ENCODE measurements at regions of chr3 and their contacts with region 1.

Region 1: DNA sequence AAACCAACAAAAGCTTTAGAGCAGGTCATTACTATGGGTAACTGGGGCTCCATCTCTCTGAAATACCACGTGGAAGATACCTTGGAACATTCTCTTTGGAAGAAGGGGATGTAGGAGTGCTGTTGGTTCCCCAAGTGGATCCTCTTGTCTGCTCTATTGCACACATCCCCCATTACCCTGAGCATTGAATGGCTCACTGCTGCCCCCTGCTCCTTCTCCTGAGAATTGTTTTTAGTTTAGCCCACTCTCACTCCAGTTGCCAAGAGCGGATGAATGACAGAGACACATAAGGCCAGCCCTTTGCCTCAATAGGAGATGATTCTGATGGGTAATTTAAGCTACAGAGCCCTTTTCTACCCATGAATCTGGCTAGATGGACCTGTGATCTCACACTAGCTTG is 135.6 kb upstream of the SUCLG2 start:
- DNase-seq: no peak
- H3K4me3 ChIP-seq: no peak overlapping the region
- H3K27ac ChIP-seq: no peak overlapping the region
- H3K4me1 ChIP-seq: no peaks in the 10 kb centered on the region
- H3K27me3 ChIP-seq: no peaks in the 10 kb centered on the region
- CTCF ChIP-seq: peak; percentile 68

Region 2: DNA sequence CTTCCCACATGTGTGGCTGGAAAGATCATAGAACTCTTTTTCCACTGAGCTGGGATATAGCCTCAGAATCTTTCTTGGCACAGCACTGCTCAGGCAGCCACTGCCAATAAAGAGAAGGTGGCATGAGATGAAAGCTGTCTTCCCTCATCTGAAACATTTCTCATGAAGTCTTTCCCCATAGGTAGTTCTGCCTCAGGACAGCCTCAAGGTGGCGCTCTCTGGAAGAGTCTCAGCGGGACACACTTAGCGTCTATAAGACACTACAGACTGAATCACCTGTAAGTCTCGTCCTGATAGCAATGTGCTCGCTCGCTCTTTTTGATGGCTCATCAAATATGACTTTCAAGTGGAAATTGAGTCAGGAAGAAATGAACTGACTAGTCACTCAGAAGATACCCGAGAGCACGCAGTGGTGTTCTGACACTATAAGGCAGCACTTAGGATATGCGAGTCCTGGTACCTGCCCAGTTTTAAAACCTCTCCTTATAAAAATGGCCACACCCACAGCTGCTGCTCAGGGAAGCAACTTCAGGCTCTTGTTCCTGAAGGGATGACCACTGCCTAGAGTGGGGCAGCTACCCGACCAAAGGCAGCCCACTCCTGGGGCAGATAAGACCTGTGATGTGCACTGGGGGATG is 405.2 kb before region 1 on chr3:
- intact Hi-C with region 1: loop called (anchors 10 kb)
- DNase-seq: no peak
- H3K4me3 ChIP-seq: no peak overlapping the region
- H3K27ac ChIP-seq: no peak overlapping the region
- H3K4me1 ChIP-seq: peaks cover 37% of the 10 kb centered on the region
- H3K27me3 ChIP-seq: no peaks in the 10 kb centered on the region
- CTCF ChIP-seq: peak; percentile 66

Region 3: DNA sequence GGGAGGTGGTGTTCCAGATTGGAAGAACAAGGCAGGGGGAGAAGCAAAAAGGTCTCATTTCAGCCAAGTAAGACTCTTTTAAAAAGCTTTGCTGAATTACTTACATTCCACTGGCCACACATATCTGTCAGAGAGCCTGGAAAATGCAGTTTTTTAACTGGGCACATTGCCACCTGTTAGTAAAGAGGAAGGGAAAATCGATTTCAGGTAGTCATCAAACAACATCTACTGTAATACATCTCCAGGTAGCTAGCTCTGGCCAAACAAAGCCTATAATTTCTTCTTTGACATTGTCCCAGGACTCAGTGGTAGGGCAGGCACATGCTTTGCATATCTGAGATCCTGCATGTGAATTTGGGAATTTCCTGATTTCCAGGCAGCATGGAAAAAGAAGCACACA is 345.0 kb after region 1 on chr3:
- intact Hi-C with region 1: no loop called
- DNase-seq: no peak
- H3K4me3 ChIP-seq: no peak overlapping the region
- H3K27ac ChIP-seq: no peak overlapping the region
- H3K4me1 ChIP-seq: no peaks in the 10 kb centered on the region
- H3K27me3 ChIP-seq: no peaks in the 10 kb centered on the region
- CTCF ChIP-seq: no peak